ENCODE measurements at regions of chr2 and their contacts with region 1.

Region 1: GRCh38 chr2:219498280-219499057 is at the start of gene GMPPA:
- DNase-seq: peak; percentile 96 to 98 (median 98)
- H3K4me3 ChIP-seq: peak within 1 kb of the TSS; percentile 44 to 83 (median 76)
- H3K27ac ChIP-seq: peak within 1 kb of the TSS; percentile 74 to 88
- H3K4me1 ChIP-seq: peaks cover 4 to 41% (median 26%) of the 10 kb centered on the region in 4 experiments
- H3K27me3 ChIP-seq: peaks cover 0 to 49% (median 28%) of the 10 kb centered on the region in 5 experiments

Region 2: GRCh38 chr2:219484343-219485200 is 13.9 kb before region 1 on chr2:
- CTCF ChIA-PET with region 1: interaction called, 1,724 read pairs
- POLR2A ChIA-PET with region 1: interaction called, 3 read pairs
- DNase-seq: peak in 2 of 3 donors; percentile 24 to 26
- H3K4me3 ChIP-seq: peak overlapping the region in 4 of 7 experiments; percentile 3 to 62 (median 38)
- H3K27ac ChIP-seq: no peak overlapping the region
- H3K4me1 ChIP-seq: peaks cover 0 to 18% (median 12%) of the 10 kb centered on the region in 4 experiments
- H3K27me3 ChIP-seq: peaks cover 0 to 84% (median 43%) of the 10 kb centered on the region in 5 experiments

Region 3: DNA sequence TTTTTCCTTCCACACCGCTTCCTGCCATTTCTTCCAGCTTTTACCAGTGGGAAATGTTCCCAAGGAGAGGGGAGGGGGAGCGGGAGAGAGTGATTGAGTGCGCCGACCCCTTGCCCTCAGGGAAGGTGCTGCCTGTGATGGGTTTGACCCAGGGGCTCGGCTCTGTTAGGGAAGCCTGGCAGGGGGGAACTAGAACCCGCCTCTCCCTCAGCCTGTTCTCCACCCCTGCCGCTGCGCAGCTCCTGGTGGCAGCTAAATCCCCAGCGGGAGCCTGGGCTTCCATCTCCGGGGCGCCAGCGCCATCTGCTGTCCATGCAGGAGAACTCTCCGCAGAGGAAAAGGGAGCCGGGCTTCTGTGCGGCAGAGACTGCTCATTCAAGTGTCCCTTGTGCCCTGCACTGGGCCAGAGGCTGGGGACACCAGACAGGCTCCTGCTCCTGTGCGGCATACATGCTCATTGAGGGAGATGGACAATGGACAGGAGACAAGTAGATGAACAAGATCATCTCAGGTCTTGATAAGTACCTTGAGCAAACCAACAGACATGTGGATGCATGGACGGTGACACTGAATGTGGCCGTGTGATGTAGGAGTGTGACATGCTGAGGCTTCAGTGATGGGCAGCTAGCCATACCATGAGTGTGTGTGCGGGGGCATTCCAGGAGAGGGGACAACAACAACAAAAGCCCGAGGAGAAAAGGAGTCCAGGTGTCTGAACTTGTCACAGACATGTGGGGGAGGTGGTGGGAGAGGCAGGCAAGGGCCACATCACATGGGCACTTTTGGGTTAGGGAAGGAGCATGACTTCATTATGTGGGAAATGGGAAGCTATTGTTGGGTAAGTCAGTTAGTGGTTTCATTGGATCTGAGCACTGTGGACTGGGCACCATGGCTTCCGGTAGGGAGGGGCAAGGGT is 31.8 kb after region 1 on chr2:
- CTCF ChIA-PET with region 1: interaction called, 1,724 read pairs
- POLR2A ChIA-PET with region 1: interaction called, 4 read pairs
- DNase-seq: peak; percentile 84 to 92 (median 89)
- H3K4me3 ChIP-seq: no peak overlapping the region
- H3K27ac ChIP-seq: no peak overlapping the region
- H3K4me1 ChIP-seq: peaks cover 0 to 7% (median 3%) of the 10 kb centered on the region in 4 experiments
- H3K27me3 ChIP-seq: peaks cover 4 to 71% (median 38%) of the 10 kb centered on the region in 5 experiments